ENCODE measurements at regions of chr2 and their contacts with region 1.

Region 1: DNA sequence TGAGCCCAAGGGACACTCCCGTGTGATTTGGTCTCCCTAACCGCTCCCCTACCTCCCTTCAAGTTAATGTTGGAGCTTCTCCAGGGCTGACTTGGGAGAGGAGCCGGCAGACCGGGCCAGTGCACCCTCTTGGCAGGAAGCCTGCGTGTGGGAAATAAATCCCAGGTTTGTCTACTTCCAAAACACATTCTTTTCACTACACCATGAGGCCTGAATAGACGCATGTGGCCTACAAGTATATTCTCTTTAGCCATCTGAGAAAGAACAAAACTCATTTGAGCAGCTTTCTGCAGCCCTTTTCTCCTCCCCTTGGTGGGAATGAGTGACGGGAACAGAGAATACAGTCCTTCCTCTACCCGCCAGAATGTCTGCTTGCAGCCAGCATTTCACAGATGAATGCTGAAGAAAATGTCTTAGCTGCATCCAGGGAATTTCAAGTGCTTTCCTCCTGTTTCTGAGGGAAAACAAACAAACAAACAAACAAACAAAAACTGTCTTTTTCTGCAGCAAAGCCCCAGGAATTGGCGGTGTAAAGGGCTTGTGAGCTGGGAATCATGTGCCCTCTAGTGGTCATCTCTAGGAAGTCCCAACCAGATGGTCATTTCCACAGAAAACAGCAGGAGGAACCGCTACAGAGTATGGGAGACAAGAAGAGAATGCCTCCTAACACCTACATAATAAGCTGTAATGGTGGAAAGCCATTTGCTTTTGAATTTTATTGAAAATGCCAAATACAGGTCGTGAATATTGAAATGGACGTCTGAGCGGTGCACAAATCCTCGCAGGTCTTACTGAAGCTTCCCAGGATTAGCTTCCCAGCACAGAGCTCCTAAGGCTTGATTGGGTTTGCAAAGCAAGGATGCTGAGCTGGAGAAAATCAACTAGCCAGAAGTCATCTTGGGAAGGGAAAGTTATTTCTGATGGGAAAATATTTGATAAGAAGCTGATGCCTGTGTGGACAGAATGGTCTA is 41.2 kb upstream of the DAPL1 start:
- DNase-seq: peak; percentile 34
- ATAC-seq: peak; percentile 69
- H3K4me3 Mint-ChIP-seq: no peak overlapping the region
- H3K27ac Mint-ChIP-seq: no peak overlapping the region
- H3K4me1 Mint-ChIP-seq: no peaks in the 10 kb centered on the region
- H3K27me3 Mint-ChIP-seq: peaks cover 14% of the 10 kb centered on the region

Region 2: DNA sequence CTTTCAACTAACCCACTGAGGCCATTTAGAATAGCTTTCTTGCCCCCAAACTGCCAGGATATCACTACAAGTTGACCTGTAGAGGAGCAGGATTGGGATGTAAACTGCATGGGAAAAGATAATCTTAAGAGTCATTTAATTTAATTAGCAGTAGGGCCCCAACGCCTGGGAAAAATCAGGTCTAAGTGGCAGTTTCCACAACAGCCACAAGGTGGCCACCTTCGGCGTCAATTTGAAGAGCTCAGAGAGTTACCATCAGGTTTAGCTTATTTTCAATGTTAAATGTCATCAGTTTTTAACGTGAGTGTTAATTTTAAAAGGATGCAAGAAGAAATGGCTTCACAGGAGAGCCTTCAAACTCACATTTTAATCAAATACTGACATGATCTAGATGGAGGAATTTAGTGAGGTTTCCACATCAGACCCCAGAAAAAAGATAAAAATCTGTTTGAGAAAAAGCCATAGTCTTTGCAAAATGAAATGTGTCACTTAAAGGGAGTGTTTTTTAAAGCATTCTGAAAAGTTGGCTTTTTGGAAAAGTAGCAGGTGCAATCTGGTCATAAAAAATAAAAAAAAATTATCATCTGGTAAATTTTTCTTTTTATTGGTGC is 729.5 kb before region 1 on chr2:
- CTCF ChIA-PET with region 1: interaction called, 51 read pairs
- POLR2A ChIA-PET with region 1: no interaction called
- DNase-seq: peak; percentile 63
- ATAC-seq: peak; percentile 64
- H3K4me3 Mint-ChIP-seq: no peak overlapping the region
- H3K27ac Mint-ChIP-seq: no peak overlapping the region
- H3K4me1 Mint-ChIP-seq: peaks cover 4% of the 10 kb centered on the region
- H3K27me3 Mint-ChIP-seq: peaks cover 3% of the 10 kb centered on the region

Region 3: DNA sequence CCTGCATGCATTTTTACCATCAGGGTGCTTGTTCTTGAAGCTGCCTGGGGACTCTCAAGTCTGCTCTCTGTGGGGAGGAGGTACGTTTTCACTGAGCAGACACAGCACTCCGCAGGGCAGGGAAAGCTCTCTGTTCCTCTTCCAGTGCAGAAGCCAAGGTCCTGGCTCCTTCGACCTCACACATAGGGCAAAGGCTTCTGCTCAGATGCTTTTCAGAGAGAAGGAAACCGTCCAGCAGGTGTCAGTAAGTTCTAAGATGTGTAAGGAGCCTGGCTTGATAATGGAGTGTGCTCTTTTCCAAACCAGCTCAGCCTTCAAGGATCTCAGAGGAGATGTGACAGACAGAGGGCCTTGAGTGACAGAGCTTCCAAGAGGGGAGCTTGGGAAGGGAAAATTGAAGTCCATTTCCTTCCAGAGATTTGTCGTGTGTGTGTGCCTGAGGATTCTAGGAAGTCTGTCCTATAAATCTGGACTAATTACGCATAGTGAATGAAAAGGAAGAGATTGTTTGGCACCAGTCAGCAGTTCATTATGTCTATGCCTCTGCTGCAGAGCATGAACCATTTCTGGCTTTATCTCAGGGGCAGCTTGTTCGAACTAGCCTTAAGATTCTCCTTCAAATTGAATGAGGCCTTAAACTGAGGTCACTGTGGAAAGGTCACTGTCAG is 719.6 kb before region 1 on chr2:
- CTCF ChIA-PET with region 1: interaction called, 12 read pairs
- POLR2A ChIA-PET with region 1: no interaction called
- DNase-seq: peak; percentile 30
- ATAC-seq: no peak
- H3K4me3 Mint-ChIP-seq: no peak overlapping the region
- H3K27ac Mint-ChIP-seq: no peak overlapping the region
- H3K4me1 Mint-ChIP-seq: no peaks in the 10 kb centered on the region
- H3K27me3 Mint-ChIP-seq: peaks cover 2% of the 10 kb centered on the region

Region 4: DNA sequence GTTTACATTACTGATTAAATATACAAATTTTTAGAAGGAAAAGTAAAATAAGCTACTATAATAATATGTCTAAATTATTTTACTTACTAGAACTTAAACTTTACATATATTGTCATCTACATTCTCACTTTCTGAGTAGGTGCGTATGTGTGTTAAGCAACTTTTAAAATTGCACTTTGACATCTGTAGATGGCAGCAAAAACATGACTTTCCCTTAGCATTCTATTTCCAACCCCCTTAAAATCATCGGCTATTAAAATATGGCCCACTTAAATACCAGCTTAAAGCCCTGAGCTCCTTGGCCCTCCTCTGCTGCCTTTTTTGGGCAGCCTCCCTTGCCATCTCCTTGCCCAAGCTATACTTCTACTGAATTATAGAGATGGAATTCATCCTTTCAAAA is 574.3 kb before region 1 on chr2:
- CTCF ChIA-PET with region 1: interaction called, 20 read pairs
- POLR2A ChIA-PET with region 1: no interaction called
- DNase-seq: no peak
- ATAC-seq: no peak
- H3K4me3 Mint-ChIP-seq: no peak overlapping the region
- H3K27ac Mint-ChIP-seq: no peak overlapping the region
- H3K4me1 Mint-ChIP-seq: no peaks in the 10 kb centered on the region
- H3K27me3 Mint-ChIP-seq: peaks cover 22% of the 10 kb centered on the region